ENCODE measurements at regions of chr11 and their contacts with region 1.

Region 1: GRCh38 chr11:57335343-57336110 is at the start of gene SSRP1:
- DNase-seq: peak; percentile 97
- H3K4me3 ChIP-seq: peak within 1 kb of the TSS; percentile 86
- H3K27ac ChIP-seq: peak within 1 kb of the TSS; percentile 93
- H3K4me1 ChIP-seq: peaks cover 11% of the 10 kb centered on the region
- H3K27me3 ChIP-seq: no peaks in the 10 kb centered on the region
- CTCF ChIP-seq: no peak; the same call in 1 of the 2 replicates
- total RNA-seq, gene SSRP1: 393 and 399 TPM in 2 replicates

Region 2: DNA sequence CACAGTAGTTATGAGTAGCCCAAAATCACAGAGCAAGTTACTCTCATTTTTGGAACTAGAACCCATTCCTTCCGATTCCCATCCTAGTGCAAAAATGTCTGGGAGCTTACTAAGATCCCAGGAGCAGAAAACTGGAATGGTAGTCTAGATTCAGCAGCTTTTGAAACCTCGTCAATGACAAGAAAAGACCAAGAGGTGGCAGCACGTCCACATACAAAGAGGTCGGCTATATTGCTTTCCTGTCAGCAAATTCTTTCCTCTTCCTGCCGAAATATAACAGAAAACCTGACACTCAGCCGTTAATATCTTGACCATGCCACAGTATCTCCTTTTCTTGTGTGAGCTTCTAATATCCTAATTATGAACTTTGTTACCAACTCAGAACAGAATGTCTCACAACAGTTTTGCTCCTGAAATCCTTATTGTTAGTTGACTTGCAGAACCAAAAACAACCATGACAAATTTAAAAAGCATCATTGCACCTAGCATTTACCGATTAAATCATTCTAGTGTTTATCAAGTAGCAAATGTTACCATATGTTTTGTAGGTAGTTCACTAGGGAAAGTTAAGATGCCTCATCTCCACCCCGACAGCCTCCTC is 494.2 kb before region 1 on chr11:
- CTCF ChIA-PET with region 1: interaction called, 4 read pairs
- POLR2A ChIA-PET with region 1: no interaction called
- intact Hi-C with region 1: loop called (anchors 5 kb)
- DNase-seq: peak; percentile 70
- H3K4me3 ChIP-seq: no peak overlapping the region
- H3K27ac ChIP-seq: no peak overlapping the region
- H3K4me1 ChIP-seq: no peaks in the 10 kb centered on the region
- H3K27me3 ChIP-seq: peaks cover 16% of the 10 kb centered on the region
- CTCF ChIP-seq: peak; percentile 79

Region 3: DNA sequence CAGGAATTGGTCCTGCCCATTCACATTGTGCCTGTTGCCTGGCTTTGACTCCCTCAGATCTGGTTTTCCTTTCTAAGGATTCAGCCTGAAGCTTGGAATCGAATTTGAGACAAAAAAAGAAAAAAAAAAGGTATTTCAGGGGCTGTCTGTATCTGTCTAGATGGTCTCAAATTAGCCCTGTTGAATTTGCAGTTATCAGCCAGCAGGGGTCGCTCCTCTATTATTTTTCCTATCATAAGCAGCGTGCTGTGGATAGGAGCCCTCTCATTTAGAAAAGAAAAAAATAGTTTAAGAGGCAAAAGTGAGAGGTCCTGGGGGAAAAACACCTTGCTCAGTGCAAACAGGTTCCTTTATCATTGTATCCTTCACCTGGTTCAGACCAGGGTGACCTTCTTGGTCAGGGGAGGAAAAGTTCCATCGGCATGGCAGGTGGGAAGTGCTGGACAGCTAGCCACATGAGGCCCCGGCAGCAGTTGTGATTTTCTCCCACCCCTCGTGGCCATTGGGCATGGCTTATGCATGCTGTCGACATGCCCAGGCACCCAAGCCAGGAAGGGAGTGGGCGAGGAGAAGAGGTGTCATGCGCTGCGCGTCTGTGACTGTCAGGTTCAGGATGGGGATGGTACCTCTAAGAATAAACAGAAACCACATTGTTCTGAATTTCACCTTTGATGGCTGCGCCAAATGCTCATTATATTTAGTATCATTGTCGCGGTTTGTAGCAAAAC is 333.7 kb before region 1 on chr11:
- CTCF ChIA-PET with region 1: no interaction called
- POLR2A ChIA-PET with region 1: no interaction called
- intact Hi-C with region 1: no loop called
- DNase-seq: peak; percentile 5
- H3K4me3 ChIP-seq: no peak overlapping the region
- H3K27ac ChIP-seq: no peak overlapping the region
- H3K4me1 ChIP-seq: no peaks in the 10 kb centered on the region
- H3K27me3 ChIP-seq: no peaks in the 10 kb centered on the region
- CTCF ChIP-seq: peak; percentile 52

Region 4: GRCh38 chr11:57324886-57325734 is 10.4 kb before region 1 on chr11 and contains the start of gene TNKS1BP1:
- CTCF ChIA-PET with region 1: interaction called, 4 read pairs
- POLR2A ChIA-PET with region 1: interaction called, 4 read pairs
- intact Hi-C with region 1: loop called (anchors 1 kb)
- DNase-seq: peak; percentile 99
- H3K4me3 ChIP-seq: peak within 1 kb of the TSS; percentile 74
- H3K27ac ChIP-seq: peak within 1 kb of the TSS; percentile 85
- H3K4me1 ChIP-seq: peaks cover 43% of the 10 kb centered on the region
- H3K27me3 ChIP-seq: no peaks in the 10 kb centered on the region
- CTCF ChIP-seq: no peak
- total RNA-seq, gene TNKS1BP1: 80.4 and 88.8 TPM in 2 replicates

Region 5: GRCh38 chr11:57456960-57457642 is 121.6 kb after region 1 on chr11:
- CTCF ChIA-PET with region 1: no interaction called
- POLR2A ChIA-PET with region 1: no interaction called
- intact Hi-C with region 1: no loop called
- DNase-seq: peak; percentile 86
- H3K4me3 ChIP-seq: no peak overlapping the region
- H3K27ac ChIP-seq: no peak overlapping the region
- H3K4me1 ChIP-seq: peaks cover 27% of the 10 kb centered on the region
- H3K27me3 ChIP-seq: peaks cover 30% of the 10 kb centered on the region
- CTCF ChIP-seq: peak; percentile 99

Region 6: DNA sequence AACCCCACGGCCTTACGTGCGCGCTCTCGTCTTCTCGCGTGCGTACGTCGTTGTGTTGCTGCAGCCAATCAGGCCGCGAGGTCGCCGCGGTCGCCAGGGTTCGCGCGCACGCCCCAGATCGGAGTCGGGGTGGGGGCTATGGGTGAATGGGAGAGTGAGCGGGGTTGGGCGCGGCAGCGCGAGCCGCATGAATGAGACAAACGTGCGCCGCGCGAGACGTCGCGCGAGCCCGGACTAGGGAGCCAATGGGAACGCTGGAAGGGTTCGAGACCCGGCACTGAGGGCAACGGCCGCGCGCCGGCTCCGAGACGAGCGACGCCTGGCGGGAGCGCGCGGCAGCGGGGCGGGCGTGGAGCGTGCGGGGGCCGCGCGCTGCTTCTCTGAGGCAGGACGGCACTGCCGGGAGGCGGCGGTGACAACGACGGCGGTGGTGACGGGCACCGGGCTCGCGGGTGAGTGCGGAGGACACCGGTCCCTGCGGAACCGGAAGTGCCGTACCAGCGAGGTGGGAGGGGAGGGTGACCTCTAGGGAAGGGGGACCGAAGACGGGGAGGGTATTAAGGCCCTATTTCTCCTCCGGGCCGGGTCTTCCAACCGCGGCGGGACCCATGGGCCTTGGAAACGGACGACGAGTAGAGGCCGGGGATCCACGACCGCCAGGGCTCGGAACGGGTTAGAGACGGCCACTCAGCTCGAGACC is 332.4 kb after region 1 on chr11 and contains the start of gene ZDHHC5:
- CTCF ChIA-PET with region 1: no interaction called
- POLR2A ChIA-PET with region 1: no interaction called
- intact Hi-C with region 1: loop called (anchors 5 kb)
- DNase-seq: peak; percentile 100
- H3K4me3 ChIP-seq: peak within 1 kb of the TSS; percentile 70
- H3K27ac ChIP-seq: peak within 1 kb of the TSS; percentile 97
- H3K4me1 ChIP-seq: peaks cover 10% of the 10 kb centered on the region
- H3K27me3 ChIP-seq: no peaks in the 10 kb centered on the region
- CTCF ChIP-seq: peak; percentile 46
- total RNA-seq, gene ZDHHC5: 72.9 and 76.9 TPM in 2 replicates